CD14-positive monocyte (primary cell): ENCODE measurements at regions of chr6 and their contacts with region 1.

Region 1: GRCh38 chr6:13229205-13230085 is 98.9 kb downstream of the TBC1D7 start:
- DNase-seq: no peak
- H3K4me3 ChIP-seq: no peak overlapping the region
- H3K4me3 Mint-ChIP-seq: no peak overlapping the region
- H3K27ac ChIP-seq: no peak overlapping the region
- H3K27ac Mint-ChIP-seq: no peak overlapping the region
- H3K4me1 ChIP-seq: no peaks in the 10 kb centered on the region
- H3K4me1 Mint-ChIP-seq: peaks cover 3% of the 10 kb centered on the region
- H3K27me3 ChIP-seq: no peaks in the 10 kb centered on the region
- H3K27me3 Mint-ChIP-seq: peaks cover 0 to 2% (median 0%) of the 10 kb centered on the region in 3 donors
- CTCF ChIP-seq: no peak

Region 2: DNA sequence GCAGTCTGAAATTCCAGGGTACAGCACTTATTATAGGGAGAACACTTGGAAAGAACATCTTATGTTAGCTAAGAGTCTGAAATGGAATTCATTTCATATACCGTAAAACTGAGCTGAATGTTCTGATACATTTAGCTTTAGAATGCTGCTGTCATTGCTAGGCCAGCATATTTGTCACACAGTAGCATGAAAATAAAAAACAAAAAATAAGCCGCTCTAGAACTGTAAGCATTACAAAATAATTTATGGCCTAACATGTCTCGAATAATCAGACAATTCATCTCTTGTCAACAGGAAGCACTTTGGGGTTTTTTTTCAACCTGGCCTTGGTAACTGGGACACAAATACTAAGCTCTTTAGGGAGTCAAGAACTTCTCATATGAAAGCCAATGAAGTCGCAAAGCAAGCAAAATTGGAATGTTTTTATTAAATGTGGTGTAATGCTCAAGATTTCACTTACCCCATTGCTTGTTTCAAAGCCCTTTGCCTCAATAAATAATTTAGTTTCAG is 397.2 kb before region 1 on chr6:
- intact Hi-C with region 1: no loop called
- DNase-seq: no peak
- H3K4me3 ChIP-seq: no peak overlapping the region
- H3K4me3 Mint-ChIP-seq: no peak overlapping the region
- H3K27ac ChIP-seq: no peak overlapping the region
- H3K27ac Mint-ChIP-seq: no peak overlapping the region
- H3K4me1 ChIP-seq: no peaks in the 10 kb centered on the region
- H3K4me1 Mint-ChIP-seq: no peaks in the 10 kb centered on the region
- H3K27me3 ChIP-seq: no peaks in the 10 kb centered on the region
- H3K27me3 Mint-ChIP-seq: peaks cover 0 to 3% (median 2%) of the 10 kb centered on the region in 3 donors
- CTCF ChIP-seq: no peak

Region 3: DNA sequence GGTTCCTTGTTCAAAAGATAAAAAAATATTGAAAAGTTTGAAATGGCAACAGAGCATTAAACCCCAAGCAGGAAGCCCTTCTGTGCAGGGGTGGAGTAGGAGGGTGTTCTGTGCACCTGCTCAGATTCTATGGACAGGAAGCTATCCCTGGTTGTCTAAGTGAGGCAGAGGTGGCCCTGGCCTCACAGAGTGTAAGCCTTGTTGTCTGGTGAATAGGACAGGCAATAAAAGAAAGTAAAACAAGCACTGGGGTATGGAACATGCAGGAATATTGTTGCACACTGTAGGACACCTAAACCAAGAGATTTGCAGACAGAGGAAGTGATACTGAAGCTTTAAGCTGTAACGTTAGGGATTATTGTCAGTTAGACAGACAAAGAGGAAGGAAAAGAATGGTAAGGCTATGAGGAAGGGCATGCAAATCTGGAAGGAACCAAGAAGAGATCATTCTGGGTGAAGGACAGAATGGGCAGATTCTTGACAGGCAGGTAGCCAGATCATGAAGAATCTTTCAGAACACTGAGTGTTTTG is 32.1 kb after region 1 on chr6:
- intact Hi-C with region 1: loop called in 1 of 2 experiments (anchors 5 kb)
- DNase-seq: peak; percentile 72 to 86 (median 78)
- H3K4me3 ChIP-seq: peak overlapping the region in 2 of 3 experiments; percentile 11 to 63
- H3K4me3 Mint-ChIP-seq: peak overlapping the region; percentile 48 to 74
- H3K27ac ChIP-seq: peak overlapping the region; percentile 41 to 79
- H3K27ac Mint-ChIP-seq: peak overlapping the region; percentile 85 to 94 (median 88)
- H3K4me1 ChIP-seq: peaks cover 57 to 63% of the 10 kb centered on the region in 2 donors
- H3K4me1 Mint-ChIP-seq: peaks cover 58% of the 10 kb centered on the region
- H3K27me3 ChIP-seq: no peaks in the 10 kb centered on the region
- H3K27me3 Mint-ChIP-seq: no peaks in the 10 kb centered on the region
- CTCF ChIP-seq: no peak

Region 4: DNA sequence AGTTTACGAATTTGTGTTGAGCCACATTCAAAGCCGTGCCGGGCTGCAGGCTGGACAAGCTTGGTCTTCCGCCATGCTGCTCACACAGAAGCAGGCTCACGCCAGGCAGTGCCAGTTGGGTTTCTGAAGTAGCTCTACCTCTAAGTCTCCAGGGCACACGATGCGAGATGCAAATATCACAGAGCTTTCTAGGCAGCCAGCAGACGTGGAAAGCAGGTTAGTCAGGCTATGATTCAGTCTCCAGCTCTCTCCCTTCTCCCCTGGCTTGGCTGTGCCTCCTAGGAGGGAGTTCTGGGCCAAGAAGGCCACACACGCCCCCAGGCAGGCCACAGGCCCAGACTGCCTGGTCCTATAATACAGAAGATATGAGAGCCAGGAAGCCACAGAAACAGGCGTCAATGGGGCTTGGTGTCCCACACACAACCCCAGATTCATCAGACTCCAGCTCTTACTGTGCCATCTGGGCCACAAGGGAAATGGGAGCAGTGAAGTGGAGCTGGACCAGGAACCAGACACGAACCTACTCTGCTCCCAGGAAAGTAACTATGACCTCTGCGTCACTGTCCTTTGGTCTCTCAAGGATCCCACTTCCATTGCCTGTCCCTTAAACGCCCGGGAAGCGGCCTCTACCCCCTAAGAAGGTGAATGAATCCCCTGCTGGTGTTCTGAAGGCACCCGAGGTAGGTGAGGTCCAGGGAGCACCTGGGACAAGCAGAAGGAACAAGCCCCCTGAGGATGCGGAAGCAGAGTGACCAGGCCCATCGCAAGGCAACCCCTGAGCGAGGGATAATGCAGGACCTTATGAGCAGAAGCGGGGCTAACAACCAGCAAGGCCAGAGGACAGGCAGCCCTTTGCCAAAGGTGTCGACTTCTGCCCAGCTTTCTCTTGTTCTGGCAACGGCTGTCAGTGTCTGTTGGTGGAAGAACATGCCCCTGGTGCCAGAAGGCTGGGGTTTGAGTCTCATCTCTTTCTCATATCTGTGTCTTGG is 196.8 kb after region 1 on chr6:
- intact Hi-C with region 1: no loop called
- DNase-seq: no peak
- H3K4me3 ChIP-seq: no peak overlapping the region
- H3K4me3 Mint-ChIP-seq: no peak overlapping the region
- H3K27ac ChIP-seq: no peak overlapping the region
- H3K27ac Mint-ChIP-seq: peak overlapping the region in 2 of 7 donors; percentile 10 to 33
- H3K4me1 ChIP-seq: peaks cover 19 to 27% of the 10 kb centered on the region in 2 donors
- H3K4me1 Mint-ChIP-seq: peaks cover 30% of the 10 kb centered on the region
- H3K27me3 ChIP-seq: no peaks in the 10 kb centered on the region
- H3K27me3 Mint-ChIP-seq: peaks cover 2 to 7% (median 7%) of the 10 kb centered on the region in 3 donors
- CTCF ChIP-seq: no peak

Region 5: DNA sequence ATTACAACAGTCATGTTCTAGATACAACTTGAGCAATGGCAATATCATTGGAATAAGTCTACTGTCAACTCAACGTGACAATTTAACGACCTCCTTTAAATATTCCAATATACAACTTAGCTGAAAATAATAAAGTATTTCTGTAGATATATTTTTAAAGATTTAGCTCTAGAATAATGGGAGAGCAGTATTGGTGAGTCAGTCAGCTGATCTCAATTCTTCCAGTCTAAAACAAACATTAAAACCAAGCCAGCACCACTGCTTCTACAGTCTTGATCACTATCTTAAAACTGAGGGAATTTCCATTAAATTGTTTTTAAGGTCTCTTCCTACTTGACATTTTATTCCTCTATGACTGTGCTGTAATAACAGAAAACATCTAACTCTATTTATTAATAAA is 423.9 kb after region 1 on chr6:
- intact Hi-C with region 1: no loop called
- DNase-seq: no peak
- H3K4me3 ChIP-seq: no peak overlapping the region
- H3K4me3 Mint-ChIP-seq: no peak overlapping the region
- H3K27ac ChIP-seq: no peak overlapping the region
- H3K27ac Mint-ChIP-seq: no peak overlapping the region
- H3K4me1 ChIP-seq: no peaks in the 10 kb centered on the region
- H3K4me1 Mint-ChIP-seq: no peaks in the 10 kb centered on the region
- H3K27me3 ChIP-seq: no peaks in the 10 kb centered on the region
- H3K27me3 Mint-ChIP-seq: no peaks in the 10 kb centered on the region
- CTCF ChIP-seq: no peak